HepG2 (cell line): ENCODE measurements at regions of chr5 and their contacts with region 1.

Region 1: GRCh38 chr5:149345147-149345875 is at the start of gene GRPEL2:
- DNase-seq: peak; percentile 94
- ATAC-seq: peak; percentile 99
- H3K4me3 ChIP-seq: peak within 1 kb of the TSS; percentile 85 to 98 (median 91)
- H3K27ac ChIP-seq: peak within 1 kb of the TSS; percentile 74
- H3K4me1 ChIP-seq: peaks cover 50% of the 10 kb centered on the region
- H3K27me3 ChIP-seq: no peaks in the 10 kb centered on the region; a peak in 1 of 5 replicates
- CTCF ChIP-seq: 0 out of 2 replicates have a peak, but pooled peaks have one; percentile 22
- EP300 ChIP-seq: 0 out of 4 replicates have a peak, but pooled peaks of 1 of the 2 experiments have one; percentile 18
- POLR2A ChIP-seq: peak; percentile 78 to 90; a peak in 3 of 4 replicates
- RAD21 ChIP-seq: no peak; the same call in 1 of the 2 replicates
- total RNA-seq, gene GRPEL2: 16.6 and 28.4 TPM in 2 replicates

Region 2: DNA sequence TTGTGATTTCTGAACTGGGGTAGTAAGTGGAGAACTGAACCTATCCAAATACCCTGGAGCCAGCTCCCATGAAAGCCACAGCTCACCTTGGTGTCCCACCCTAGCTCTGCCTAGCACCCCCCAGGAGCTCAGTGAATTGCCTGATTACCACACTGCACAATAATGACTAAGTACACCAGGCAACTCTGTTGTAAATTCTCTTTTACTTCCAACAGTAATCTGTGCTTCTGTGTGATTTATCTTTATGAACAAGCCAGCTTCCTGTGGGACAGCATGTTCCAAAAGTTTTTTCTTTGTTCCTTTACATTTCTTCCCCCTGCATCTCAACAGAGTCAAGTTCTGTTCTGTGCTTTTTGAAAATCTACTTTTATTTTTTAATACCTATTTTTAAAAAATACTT is 22.1 kb before region 1 on chr5:
- CTCF ChIA-PET with region 1: no interaction called
- POLR2A ChIA-PET with region 1: interaction called, 93 read pairs
- in situ Hi-C with region 1: no loop called
- intact Hi-C with region 1: loop called (anchors 2 kb)
- DNase-seq: no peak
- ATAC-seq: no peak
- H3K4me3 ChIP-seq: no peak overlapping the region
- H3K27ac ChIP-seq: peak overlapping the region; percentile 54
- H3K4me1 ChIP-seq: peaks cover 62% of the 10 kb centered on the region
- H3K27me3 ChIP-seq: no peaks in the 10 kb centered on the region
- CTCF ChIP-seq: no peak
- EP300 ChIP-seq: no peak
- POLR2A ChIP-seq: no peak
- RAD21 ChIP-seq: no peak

Region 3: DNA sequence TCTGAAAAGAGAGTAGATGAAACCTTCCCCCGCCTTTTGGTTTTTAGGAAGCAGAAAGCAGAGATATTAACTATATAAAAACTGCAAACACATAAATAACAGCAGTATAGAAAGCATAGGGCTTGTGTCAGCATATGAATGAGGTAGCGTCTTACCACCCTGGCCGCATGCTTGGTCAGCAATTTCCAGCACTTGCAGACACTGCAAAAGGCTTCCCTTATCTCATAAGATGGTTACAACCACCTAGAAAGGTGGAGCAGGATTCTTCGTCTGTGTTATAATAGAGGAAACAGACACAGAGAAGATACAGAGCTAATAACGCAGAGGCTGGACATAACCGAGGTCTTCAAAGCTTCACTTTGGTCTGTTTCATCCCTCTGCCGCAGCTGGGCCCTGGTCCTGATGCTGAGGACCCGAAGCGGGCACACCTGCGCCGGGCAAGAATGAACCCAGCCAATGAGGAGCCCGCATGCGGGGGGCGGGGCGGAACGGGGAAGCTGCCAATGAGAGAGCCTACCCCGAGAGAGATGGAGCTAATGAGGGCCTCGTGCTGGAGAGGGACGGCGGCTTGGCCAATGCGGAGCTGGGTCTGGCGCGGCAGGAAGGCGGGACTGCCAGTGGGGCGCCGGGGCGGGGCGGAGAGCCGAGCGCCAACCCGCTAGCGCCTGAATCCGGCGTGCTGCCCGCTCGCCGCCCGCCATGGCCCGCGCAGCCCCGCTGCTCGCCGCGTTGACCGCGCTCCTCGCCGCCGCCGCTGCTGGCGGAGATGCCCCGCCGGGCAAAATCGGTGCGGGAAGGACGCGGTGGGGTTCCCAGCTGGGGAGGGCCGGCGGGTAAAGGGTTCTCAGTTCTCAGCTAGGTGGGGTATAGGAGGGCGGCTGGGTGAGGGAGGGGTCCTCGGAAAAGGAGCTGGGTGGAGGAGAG is 12.3 kb after region 1 on chr5 and contains the start of gene PCYOX1L:
- CTCF ChIA-PET with region 1: no interaction called
- POLR2A ChIA-PET with region 1: interaction called, 32 read pairs
- in situ Hi-C with region 1: no loop called
- intact Hi-C with region 1: no loop called
- DNase-seq: peak; percentile 92
- ATAC-seq: peak; percentile 100
- H3K4me3 ChIP-seq: peak within 1 kb of the TSS; percentile 60 to 79 (median 63)
- H3K27ac ChIP-seq: no peak within 1 kb of the TSS
- H3K4me1 ChIP-seq: peaks cover 21% of the 10 kb centered on the region
- H3K27me3 ChIP-seq: no peaks in the 10 kb centered on the region
- CTCF ChIP-seq: no peak; the same call in 1 of the 2 replicates
- EP300 ChIP-seq: no peak
- POLR2A ChIP-seq: peak in 1 of 2 experiments; percentile 80; a peak in 2 of 4 replicates
- RAD21 ChIP-seq: no peak
- total RNA-seq, gene PCYOX1L: 0.24 and 1.00 TPM in 2 replicates

Region 4: GRCh38 chr5:149960272-149961185 is 615.2 kb after region 1 on chr5 and contains the start of gene SLC26A2:
- CTCF ChIA-PET with region 1: no interaction called
- POLR2A ChIA-PET with region 1: no interaction called
- in situ Hi-C with region 1: no loop called
- intact Hi-C with region 1: no loop called
- DNase-seq: peak; percentile 92
- ATAC-seq: peak; percentile 99
- H3K4me3 ChIP-seq: peak within 1 kb of the TSS; percentile 51 to 77 (median 69)
- H3K27ac ChIP-seq: peak within 1 kb of the TSS; percentile 52
- H3K4me1 ChIP-seq: peaks cover 50% of the 10 kb centered on the region
- H3K27me3 ChIP-seq: no peaks in the 10 kb centered on the region
- CTCF ChIP-seq: peak; percentile 17; the same call in 1 of the 2 replicates
- EP300 ChIP-seq: no peak
- POLR2A ChIP-seq: peak; percentile 85 to 91
- RAD21 ChIP-seq: peak; percentile 48; the same call in 1 of the 2 replicates
- total RNA-seq, gene SLC26A2: 6.3 and 7.9 TPM in 2 replicates